ENCODE measurements at regions of chr11 and their contacts with region 1.

Region 1: GRCh38 chr11:72807021-72807693 is 7.1 kb upstream of the ATG16L2 start:
- DNase-seq: peak in 1 of 5 donors; percentile 21
- ATAC-seq: peak; percentile 11 to 69 (median 52)
- H3K4me3 ChIP-seq: no peak overlapping the region
- H3K27ac ChIP-seq: peak overlapping the region in 6 of 12 donors; percentile 9 to 94 (median 44)
- H3K4me1 ChIP-seq: peaks cover 0 to 73% (median 3%) of the 10 kb centered on the region in 12 donors
- H3K27me3 ChIP-seq: no peaks in the 10 kb centered on the region
- CTCF ChIP-seq: no peak
- POLR2A ChIP-seq: no peak

Region 2: GRCh38 chr11:72274435-72274834 is 532.7 kb before region 1 on chr11:
- intact Hi-C with region 1: no loop called
- DNase-seq: no peak
- ATAC-seq: no peak
- H3K4me3 ChIP-seq: no peak overlapping the region
- H3K27ac ChIP-seq: no peak overlapping the region
- H3K4me1 ChIP-seq: peaks cover 0 to 7% (median 0%) of the 10 kb centered on the region in 12 donors
- H3K27me3 ChIP-seq: peaks cover 0 to 9% (median 0%) of the 10 kb centered on the region in 9 donors
- CTCF ChIP-seq: no peak
- POLR2A ChIP-seq: no peak

Region 3: GRCh38 chr11:72840780-72841179 is 33.6 kb after region 1 on chr11:
- intact Hi-C with region 1: no loop called
- DNase-seq: no peak
- ATAC-seq: no peak
- H3K4me3 ChIP-seq: no peak overlapping the region
- H3K27ac ChIP-seq: peak overlapping the region in 1 of 12 donors; percentile 61
- H3K4me1 ChIP-seq: peaks cover 0 to 62% (median 50%) of the 10 kb centered on the region in 12 donors
- H3K27me3 ChIP-seq: no peaks in the 10 kb centered on the region
- CTCF ChIP-seq: no peak
- POLR2A ChIP-seq: no peak

Region 4: GRCh38 chr11:74154621-74155281 is 1347.6 kb after region 1 on chr11:
- intact Hi-C with region 1: loop called in 1 of 10 experiments (anchors 10 kb)
- DNase-seq: peak in 1 of 5 donors; percentile 27
- ATAC-seq: peak in 1 of 4 donors; percentile 24
- H3K4me3 ChIP-seq: no peak overlapping the region
- H3K27ac ChIP-seq: peak overlapping the region in 1 of 12 donors; percentile 39
- H3K4me1 ChIP-seq: peaks cover 0 to 10% (median 3%) of the 10 kb centered on the region in 12 donors
- H3K27me3 ChIP-seq: no peaks in the 10 kb centered on the region
- CTCF ChIP-seq: no peak
- POLR2A ChIP-seq: no peak